Activated CD8-positive, alpha-beta T cell treated with anti-CD3 and anti-CD28 coated beads, Interleukin-2, amount 10 ng/mL, durations not matched to agents 7 days and 5 days (primary cell): ENCODE measurements at regions of chr19 and their contacts with region 1.

Region 1: DNA sequence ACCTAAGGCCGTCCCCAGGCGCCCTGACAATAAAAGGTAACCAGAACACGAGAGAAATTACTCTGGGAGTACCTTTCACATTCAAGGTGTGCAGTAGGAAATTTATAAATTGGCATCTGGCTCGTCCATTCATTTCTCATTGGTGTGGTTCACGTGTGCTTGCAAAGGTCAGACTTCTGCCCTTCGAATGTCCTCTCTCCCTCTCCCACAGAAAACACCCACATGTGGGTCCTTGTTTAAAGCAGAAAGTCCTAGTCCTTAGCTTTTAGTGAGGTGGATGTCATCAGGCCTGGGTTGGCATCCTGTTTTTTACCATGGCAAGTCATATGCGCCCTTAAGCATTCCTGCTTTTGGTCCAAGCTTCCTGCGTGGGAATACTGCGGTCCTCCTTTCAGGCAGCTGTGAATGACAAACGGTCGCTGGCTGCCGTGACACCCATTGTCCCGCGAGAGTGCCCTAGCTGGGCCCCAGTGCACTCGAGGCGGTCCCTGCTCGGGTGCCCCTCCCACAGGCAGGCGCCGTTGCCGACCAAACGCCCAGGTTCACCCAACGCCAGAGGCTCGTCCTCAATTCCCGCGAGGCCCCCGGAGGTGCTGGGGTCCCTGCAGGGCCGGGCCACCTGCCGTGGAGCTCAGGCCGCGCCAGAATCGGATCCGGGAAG is at the start of gene NUDT19:
- DNase-seq: peak; percentile 88
- ATAC-seq: peak; percentile 85
- H3K4me3 Mint-ChIP-seq: peak within 1 kb of the TSS; percentile 81
- H3K27ac Mint-ChIP-seq: peak within 1 kb of the TSS; percentile 83
- H3K4me1 Mint-ChIP-seq: peaks cover 53% of the 10 kb centered on the region
- H3K27me3 Mint-ChIP-seq: no peaks in the 10 kb centered on the region
- total RNA-seq, gene NUDT19: 12.9 to 14.3 TPM

Region 2: GRCh38 chr19:32674959-32675719 is 16.3 kb before region 1 on chr19 and contains the start of gene ANKRD27:
- CTCF ChIA-PET with region 1: interaction called, 12 read pairs
- POLR2A ChIA-PET with region 1: interaction called, 14 read pairs
- DNase-seq: peak; percentile 98
- ATAC-seq: peak; percentile 98
- H3K4me3 Mint-ChIP-seq: peak within 1 kb of the TSS; percentile 90
- H3K27ac Mint-ChIP-seq: peak within 1 kb of the TSS; percentile 88
- H3K4me1 Mint-ChIP-seq: peaks cover 42% of the 10 kb centered on the region
- H3K27me3 Mint-ChIP-seq: peaks cover 21% of the 10 kb centered on the region
- total RNA-seq, gene ANKRD27: 45.1 to 45.3 TPM